ENCODE measurements at regions of chr3 and their contacts with region 1.

Region 1: GRCh38 chr3:157755233-157755632 is 252.0 kb upstream of the VEPH1 start:
- DNase-seq: no peak
- ATAC-seq: no peak
- H3K4me3 ChIP-seq: no peak overlapping the region
- H3K27ac ChIP-seq: no peak overlapping the region
- H3K4me1 ChIP-seq: no peaks in the 10 kb centered on the region
- H3K27me3 ChIP-seq: no peaks in the 10 kb centered on the region
- CTCF ChIP-seq: peak; percentile 20 to 38 (median 33); a peak in 5 of 6 replicates
- POLR2A ChIP-seq: no peak
- RAD21 ChIP-seq: peak; percentile 31; the same call in 1 of the 2 replicates

Region 2: GRCh38 chr3:158539414-158540014 is 784.3 kb after region 1 on chr3:
- CTCF ChIA-PET with region 1: no interaction called
- POLR2A ChIA-PET with region 1: no interaction called
- RAD21 ChIA-PET with region 1: no interaction called
- intact Hi-C with region 1: loop called (anchors 10 kb)
- DNase-seq: peak; percentile 42
- ATAC-seq: peak; percentile 70
- H3K4me3 ChIP-seq: no peak overlapping the region
- H3K27ac ChIP-seq: no peak overlapping the region
- H3K4me1 ChIP-seq: no peaks in the 10 kb centered on the region
- H3K27me3 ChIP-seq: no peaks in the 10 kb centered on the region
- CTCF ChIP-seq: peak; percentile 49 to 75 (median 49); a peak in 5 of 6 replicates
- POLR2A ChIP-seq: no peak
- RAD21 ChIP-seq: peak; percentile 56